Activated CD4-positive, alpha-beta T cell treated with anti-CD3 and anti-CD28 coated beads, Interleukin-2, amount 10 ng/mL, durations not matched to agents 7 days and 5 days (primary cell): ENCODE measurements at regions of chr1 and their contacts with region 1.

Region 1: GRCh38 chr1:167454894-167455785 is 63.2 kb downstream of the CD247 start:
- DNase-seq: peak; percentile 85
- H3K4me3 Mint-ChIP-seq: peak overlapping the region; percentile 77
- H3K27ac Mint-ChIP-seq: peak overlapping the region; percentile 54
- H3K4me1 Mint-ChIP-seq: peaks cover 71% of the 10 kb centered on the region
- H3K27me3 Mint-ChIP-seq: no peaks in the 10 kb centered on the region

Region 2: DNA sequence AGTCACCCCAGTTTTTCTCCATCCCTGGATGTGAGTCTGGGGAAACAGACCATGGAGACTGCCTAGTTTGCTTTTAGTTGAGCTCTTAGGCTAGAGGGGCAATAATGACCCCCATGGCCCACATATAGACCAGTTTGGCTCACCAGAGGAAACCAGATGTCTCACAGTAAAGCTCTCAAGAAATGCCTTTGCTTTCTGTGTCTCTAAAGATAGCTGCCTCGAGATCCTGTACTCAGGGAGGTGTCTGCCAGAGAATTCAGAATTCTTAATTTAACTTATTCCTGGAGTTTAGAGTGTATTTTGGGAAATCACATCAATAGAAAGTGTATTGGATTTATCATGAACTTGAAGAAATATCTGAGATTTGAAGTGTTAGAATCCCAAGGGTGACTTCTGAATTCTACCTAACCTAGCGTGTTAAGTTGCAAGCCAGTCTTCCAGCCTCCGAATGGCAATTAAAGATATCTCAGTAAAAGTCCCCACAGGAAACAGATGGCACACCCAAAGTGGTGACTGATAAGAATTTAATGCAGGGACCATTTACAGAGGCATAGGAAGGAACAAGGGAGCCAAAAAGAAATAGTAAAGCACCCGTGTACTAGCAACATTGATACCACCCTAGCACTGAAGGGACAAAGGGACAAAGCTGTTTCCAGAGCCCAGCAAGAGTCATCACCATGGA is 324.2 kb before region 1 on chr1:
- CTCF ChIA-PET with region 1: no interaction called
- POLR2A ChIA-PET with region 1: no interaction called
- DNase-seq: no peak
- H3K4me3 Mint-ChIP-seq: no peak overlapping the region
- H3K27ac Mint-ChIP-seq: no peak overlapping the region
- H3K4me1 Mint-ChIP-seq: no peaks in the 10 kb centered on the region
- H3K27me3 Mint-ChIP-seq: peaks cover 35% of the 10 kb centered on the region

Region 3: GRCh38 chr1:167477986-167478385 is 22.8 kb after region 1 on chr1:
- CTCF ChIA-PET with region 1: interaction called, 13 read pairs
- POLR2A ChIA-PET with region 1: no interaction called
- DNase-seq: no peak
- H3K4me3 Mint-ChIP-seq: no peak overlapping the region
- H3K27ac Mint-ChIP-seq: peak overlapping the region; percentile 2
- H3K4me1 Mint-ChIP-seq: peaks cover 91% of the 10 kb centered on the region
- H3K27me3 Mint-ChIP-seq: no peaks in the 10 kb centered on the region

Region 4: DNA sequence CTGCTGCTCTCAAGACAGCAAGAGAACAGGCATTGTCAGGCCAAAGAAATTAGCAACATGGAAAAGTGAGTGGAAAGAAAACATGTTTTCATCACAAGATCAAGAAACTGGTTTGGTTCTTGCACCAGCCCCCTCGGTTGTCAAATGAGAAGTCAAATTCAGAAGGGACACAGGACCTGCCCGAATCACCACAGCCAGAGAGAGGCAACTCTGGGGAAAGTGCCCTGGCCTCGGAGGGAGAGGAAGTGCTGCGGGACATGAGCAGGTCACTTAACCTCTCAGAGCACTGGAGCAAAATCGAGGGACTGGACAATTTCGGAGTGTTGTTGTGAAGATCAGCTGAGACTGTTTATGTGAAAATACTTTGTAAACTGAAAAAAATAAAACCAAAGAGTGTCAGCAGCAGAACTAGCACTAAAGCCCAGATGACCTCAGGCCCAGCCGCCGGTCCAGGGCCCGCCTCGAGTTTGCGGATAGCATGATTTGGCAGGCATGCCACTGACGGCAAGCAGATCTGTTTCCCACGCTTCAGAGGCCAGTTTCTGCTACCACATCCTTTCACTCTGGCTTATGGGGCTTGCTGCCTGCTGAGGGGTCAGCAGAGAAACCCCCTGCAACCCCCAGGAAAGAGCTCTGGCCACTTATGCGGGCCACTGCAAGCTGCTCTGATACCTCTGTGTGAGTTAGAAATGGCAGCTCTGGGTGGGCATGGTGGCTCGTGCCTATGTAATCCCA is 31.1 kb after region 1 on chr1:
- CTCF ChIA-PET with region 1: interaction called, 15 read pairs
- POLR2A ChIA-PET with region 1: interaction called, 6 read pairs
- DNase-seq: no peak
- H3K4me3 Mint-ChIP-seq: peak overlapping the region; percentile 28
- H3K27ac Mint-ChIP-seq: peak overlapping the region; percentile 90
- H3K4me1 Mint-ChIP-seq: peaks cover 95% of the 10 kb centered on the region
- H3K27me3 Mint-ChIP-seq: no peaks in the 10 kb centered on the region